ENCODE measurements at regions of chr19 and their contacts with region 1.

Region 1: DNA sequence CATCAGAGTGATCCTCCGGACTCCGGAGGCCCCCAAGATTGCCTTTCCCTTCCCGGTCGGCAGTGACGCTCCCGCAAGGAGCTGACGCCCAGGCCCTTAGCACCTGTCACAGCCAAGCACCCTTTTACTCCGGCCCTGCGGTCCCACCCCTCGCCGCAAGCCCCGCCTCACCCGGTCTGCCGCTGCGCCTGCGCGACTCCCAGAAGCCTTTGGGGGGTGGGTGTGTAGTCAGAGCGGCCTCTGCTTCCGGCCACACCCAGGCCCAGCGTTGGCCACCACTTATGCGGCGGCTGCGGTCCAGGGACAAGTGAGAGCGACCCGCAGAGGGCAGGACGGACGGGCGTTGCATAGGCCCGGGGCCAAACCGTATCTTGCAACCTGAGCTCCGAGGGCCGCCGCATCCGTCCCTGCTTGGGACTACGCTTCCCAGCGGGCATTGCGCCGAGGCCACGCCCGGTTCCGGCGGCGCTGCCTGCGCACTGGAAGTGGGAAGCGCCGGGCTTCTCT is 441 bp upstream of the ZFP28 start:
- DNase-seq: peak; percentile 85
- ATAC-seq: peak; percentile 96
- H3K4me3 ChIP-seq: peak overlapping the region; percentile 94
- H3K27ac ChIP-seq: peak overlapping the region; percentile 100
- H3K4me1 ChIP-seq: peaks cover 2% of the 10 kb centered on the region; the same call in 1 of the 2 replicates
- H3K27me3 ChIP-seq: no peaks in the 10 kb centered on the region
- CTCF ChIP-seq: no peak
- POLR2A ChIP-seq: no peak
- RAD21 ChIP-seq: no peak

Region 2: DNA sequence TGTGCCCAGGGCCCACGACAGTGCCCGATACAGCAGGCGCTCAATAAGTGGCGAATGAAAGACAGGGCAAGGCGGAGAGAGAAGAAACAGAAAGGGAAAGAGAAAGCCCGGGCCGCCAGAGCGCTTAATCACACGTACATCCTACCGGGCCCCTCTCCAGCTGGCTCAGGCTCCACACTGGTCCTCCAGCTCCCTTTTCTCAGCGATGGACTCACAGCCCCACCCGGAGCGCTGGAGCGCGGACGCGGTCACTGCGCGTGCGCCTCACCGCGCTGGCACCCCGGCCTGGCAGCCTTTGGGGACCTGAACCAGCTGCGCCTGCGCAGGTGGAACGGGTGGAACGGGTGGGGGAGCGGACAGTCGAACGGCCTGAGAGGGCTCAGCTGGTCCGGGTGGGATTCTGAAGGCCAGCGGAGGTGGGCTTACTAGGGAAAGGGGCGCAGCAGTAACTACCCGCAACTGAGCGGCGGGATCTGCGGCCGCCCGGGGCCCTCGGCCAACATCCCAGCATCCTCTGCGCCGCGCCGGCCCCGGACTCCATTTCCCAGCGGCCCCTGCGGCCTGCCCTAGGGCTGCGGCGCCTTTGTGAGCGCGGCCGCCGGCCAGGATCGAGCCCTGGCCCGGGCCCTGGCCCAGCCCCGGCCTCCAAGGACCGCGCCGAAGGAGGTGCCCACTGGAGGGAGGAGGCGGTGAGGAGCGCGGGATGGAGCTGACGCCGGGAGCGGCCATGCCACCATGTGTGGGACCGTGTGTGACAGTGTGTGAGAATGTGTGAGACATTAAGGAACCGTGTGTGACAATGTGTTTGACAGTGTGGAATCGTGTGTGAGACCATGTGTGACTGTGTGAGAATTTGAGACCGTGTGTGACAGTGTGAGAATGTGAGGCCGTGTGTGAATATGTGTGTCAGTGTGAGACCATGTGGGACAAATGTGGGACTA is 134.3 kb before region 1 on chr19 and contains the start of gene ZNF583:
- CTCF ChIA-PET with region 1: no interaction called
- POLR2A ChIA-PET with region 1: no interaction called
- dilution Hi-C with region 1: no loop called
- in situ Hi-C with region 1: no loop called
- intact Hi-C with region 1: loop called (anchors 5 kb)
- DNase-seq: peak; percentile 97
- ATAC-seq: peak; percentile 97
- H3K4me3 ChIP-seq: peak within 1 kb of the TSS; percentile 79
- H3K27ac ChIP-seq: peak within 1 kb of the TSS; percentile 95
- H3K4me1 ChIP-seq: no peaks in the 10 kb centered on the region
- H3K27me3 ChIP-seq: no peaks in the 10 kb centered on the region
- CTCF ChIP-seq: no peak
- POLR2A ChIP-seq: peak; percentile 26; the same call in 1 of the 2 replicates
- RAD21 ChIP-seq: no peak
- total RNA-seq, gene ZNF583: 5.4 and 6.9 TPM in 2 replicates

Region 3: DNA sequence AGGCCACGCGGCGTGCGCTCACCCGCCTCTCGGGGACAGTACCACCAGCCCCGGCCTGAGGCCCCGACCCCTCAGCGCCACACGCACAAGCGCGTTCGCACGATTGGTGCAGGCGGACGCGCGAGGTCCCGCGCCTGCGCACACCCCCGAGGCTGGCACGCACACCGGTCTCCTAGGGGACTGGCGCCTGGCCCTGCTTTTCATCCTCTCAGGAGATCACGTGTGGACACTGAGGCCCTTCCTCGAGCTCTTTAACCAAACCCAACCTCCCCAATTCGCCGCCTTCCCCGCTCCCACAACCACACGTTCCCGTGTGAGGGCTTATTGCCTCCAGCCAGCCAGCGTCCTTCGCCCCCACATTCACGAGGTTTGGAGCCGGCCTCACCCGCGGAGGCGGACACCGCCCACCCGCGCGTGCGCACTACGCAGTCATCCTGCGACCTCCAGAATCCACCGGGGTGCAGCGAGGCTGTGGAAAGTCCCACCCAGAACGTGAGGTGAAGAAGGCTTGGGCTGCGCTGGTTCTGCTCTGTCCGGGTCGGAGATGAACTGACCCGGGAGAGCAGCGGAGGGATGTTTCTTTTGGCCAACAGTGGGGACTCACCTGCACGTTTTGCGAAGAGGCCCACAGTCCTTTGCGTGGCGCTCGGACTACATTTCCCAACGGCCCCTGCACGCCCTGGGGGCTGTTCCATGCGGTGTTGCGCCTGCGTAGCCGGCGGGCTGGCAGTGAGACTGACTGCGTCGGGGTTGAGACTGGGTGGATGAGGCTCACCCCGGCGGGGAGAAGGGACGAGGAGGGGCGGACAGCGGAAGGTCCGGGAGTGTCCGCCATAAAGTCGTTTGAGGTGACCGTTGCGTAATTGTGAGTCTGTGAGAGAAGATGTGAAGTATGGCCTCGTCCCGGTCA is 60.6 kb before region 1 on chr19:
- CTCF ChIA-PET with region 1: no interaction called
- POLR2A ChIA-PET with region 1: no interaction called
- dilution Hi-C with region 1: no loop called
- in situ Hi-C with region 1: no loop called
- intact Hi-C with region 1: no loop called
- DNase-seq: peak; percentile 91
- ATAC-seq: peak; percentile 90
- H3K4me3 ChIP-seq: peak overlapping the region; percentile 70
- H3K27ac ChIP-seq: peak overlapping the region; percentile 78
- H3K4me1 ChIP-seq: no peaks in the 10 kb centered on the region
- H3K27me3 ChIP-seq: no peaks in the 10 kb centered on the region
- CTCF ChIP-seq: no peak; the same call in 1 of the 2 replicates
- POLR2A ChIP-seq: peak; percentile 72
- RAD21 ChIP-seq: no peak; the same call in 1 of the 2 replicates

Region 4: GRCh38 chr19:56507446-56508289 is 30.6 kb before region 1 on chr19 and contains the start of gene ZNF471:
- CTCF ChIA-PET with region 1: no interaction called
- POLR2A ChIA-PET with region 1: no interaction called
- dilution Hi-C with region 1: no loop called
- in situ Hi-C with region 1: no loop called
- intact Hi-C with region 1: loop called (anchors 2 kb)
- DNase-seq: peak; percentile 98
- ATAC-seq: peak; percentile 100
- H3K4me3 ChIP-seq: peak within 1 kb of the TSS; percentile 66
- H3K27ac ChIP-seq: peak within 1 kb of the TSS; percentile 92
- H3K4me1 ChIP-seq: peaks cover 3% of the 10 kb centered on the region
- H3K27me3 ChIP-seq: no peaks in the 10 kb centered on the region
- CTCF ChIP-seq: no peak
- POLR2A ChIP-seq: peak; percentile 38; the same call in 1 of the 2 replicates
- RAD21 ChIP-seq: no peak
- total RNA-seq, gene ZNF471: 2.3 and 2.8 TPM in 2 replicates

Region 5: DNA sequence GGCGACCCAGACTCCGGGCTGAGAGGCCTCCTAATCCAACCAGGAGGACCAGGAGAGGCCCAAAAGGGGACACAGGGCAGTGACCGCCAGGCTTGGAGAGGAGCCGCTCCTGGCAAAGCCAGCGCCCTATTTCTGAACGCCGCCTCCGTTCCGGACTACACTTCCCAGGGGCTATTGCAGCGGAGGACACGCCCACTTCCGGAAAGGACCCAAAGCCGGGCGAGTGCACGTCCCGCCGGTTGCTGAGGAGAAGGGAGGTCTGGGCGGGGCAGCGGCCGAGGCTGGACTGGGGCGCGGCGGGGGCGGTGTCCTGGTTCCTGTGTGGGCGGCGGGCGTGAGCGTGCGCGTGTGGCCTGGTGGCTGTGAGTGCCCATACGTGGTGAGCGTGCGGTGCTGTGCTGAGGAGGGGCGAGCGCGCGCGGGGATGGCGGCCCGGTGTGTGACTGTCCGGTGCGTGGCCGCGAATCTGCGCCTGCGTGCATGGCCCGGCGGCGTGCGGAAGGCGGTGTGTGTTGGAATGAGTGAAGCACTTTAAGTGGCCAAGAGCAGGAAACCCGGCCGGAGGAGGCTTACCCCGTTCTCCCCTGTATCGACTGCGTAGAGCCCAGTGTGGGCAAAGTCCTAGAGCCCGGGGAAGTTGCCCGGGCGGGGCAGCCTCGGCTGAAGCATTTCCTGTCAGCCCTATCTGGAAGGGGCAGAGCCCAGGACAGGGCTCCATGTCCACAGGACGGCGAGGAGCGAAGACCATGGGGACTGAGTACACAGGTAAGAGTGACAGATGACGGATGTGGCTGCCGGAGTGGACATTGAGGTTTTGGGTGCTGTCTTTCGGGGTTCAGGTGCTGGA is 29.2 kb after region 1 on chr19 and contains the start of gene ZNF470:
- CTCF ChIA-PET with region 1: no interaction called
- POLR2A ChIA-PET with region 1: no interaction called
- dilution Hi-C with region 1: no loop called
- in situ Hi-C with region 1: no loop called
- intact Hi-C with region 1: loop called (anchors 1 kb)
- DNase-seq: peak; percentile 87
- ATAC-seq: peak; percentile 99
- H3K4me3 ChIP-seq: peak within 1 kb of the TSS; percentile 98
- H3K27ac ChIP-seq: peak within 1 kb of the TSS; percentile 90
- H3K4me1 ChIP-seq: no peaks in the 10 kb centered on the region
- H3K27me3 ChIP-seq: no peaks in the 10 kb centered on the region
- CTCF ChIP-seq: no peak
- POLR2A ChIP-seq: no peak
- RAD21 ChIP-seq: no peak
- total RNA-seq, gene ZNF470: 3.8 and 4.4 TPM in 2 replicates

Region 6: DNA sequence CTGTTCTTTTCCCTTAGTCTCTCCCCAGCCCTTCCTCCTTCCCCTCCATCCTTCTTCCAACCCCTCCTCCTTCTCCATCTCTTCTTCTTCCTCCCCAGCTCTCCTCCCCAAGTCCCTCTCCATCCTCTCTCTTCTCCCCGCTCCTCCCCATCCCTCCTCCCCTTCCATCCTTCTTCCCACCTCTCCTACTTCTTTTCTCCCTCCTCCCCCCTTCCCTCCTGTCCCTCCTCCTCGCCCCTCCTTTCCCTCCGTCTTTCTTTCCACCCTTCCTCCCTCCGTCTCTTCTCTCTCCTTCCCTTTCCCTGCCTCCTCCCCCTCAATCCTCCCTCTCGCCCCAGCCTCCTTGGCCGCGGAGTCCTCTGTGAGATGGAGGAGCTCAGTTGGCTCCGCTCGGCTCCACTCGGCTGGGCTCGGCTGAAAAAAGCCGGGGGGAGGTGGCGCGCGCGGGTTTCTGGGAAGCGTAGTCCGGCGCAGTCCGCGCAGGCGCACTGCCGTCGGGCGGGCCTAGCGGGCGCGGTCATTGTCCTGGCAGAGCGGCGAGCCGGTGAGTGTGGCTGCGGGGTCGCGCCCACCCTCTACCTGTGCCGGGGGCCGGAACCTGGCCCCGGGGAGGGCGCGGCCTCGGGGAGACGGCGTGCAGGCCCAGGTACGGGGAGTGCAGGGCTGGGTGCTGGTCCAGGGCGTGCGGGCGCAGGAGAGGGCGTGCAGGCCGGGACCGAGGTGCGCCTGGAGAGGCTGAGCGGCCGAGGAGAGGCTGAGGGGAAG is 56.7 kb after region 1 on chr19 and contains the start of gene ZNF71:
- CTCF ChIA-PET with region 1: no interaction called
- POLR2A ChIA-PET with region 1: no interaction called
- dilution Hi-C with region 1: no loop called
- in situ Hi-C with region 1: no loop called
- intact Hi-C with region 1: loop called (anchors 2 kb)
- DNase-seq: peak; percentile 78
- ATAC-seq: peak; percentile 98
- H3K4me3 ChIP-seq: peak within 1 kb of the TSS; percentile 96
- H3K27ac ChIP-seq: peak within 1 kb of the TSS; percentile 87
- H3K4me1 ChIP-seq: peaks cover 2% of the 10 kb centered on the region; the same call in 1 of the 2 replicates
- H3K27me3 ChIP-seq: no peaks in the 10 kb centered on the region
- CTCF ChIP-seq: no peak
- POLR2A ChIP-seq: no peak
- RAD21 ChIP-seq: no peak
- total RNA-seq, gene ZNF71: 7.5 and 9.3 TPM in 2 replicates